ENCODE measurements at regions of chr19 and their contacts with region 1.

Region 1: GRCh38 chr19:18419195-18419698 is at the start of gene SSBP4:
- DNase-seq: peak; percentile 80 to 89
- ATAC-seq: peak; percentile 43 to 69 (median 61)
- H3K4me3 ChIP-seq: peak within 1 kb of the TSS; percentile 84
- H3K27ac ChIP-seq: peak within 1 kb of the TSS; percentile 86
- H3K4me1 ChIP-seq: peaks cover 43% of the 10 kb centered on the region
- H3K27me3 ChIP-seq: peaks cover 0 to 5% (median 0%) of the 10 kb centered on the region in 3 donors
- CTCF ChIP-seq: peak; percentile 47
- total RNA-seq, gene SSBP4: 29.1 to 46.1 (median 29.6) TPM

Region 2: GRCh38 chr19:18203863-18204393 is 215.3 kb before region 1 on chr19 and contains the start of gene RAB3A:
- intact Hi-C with region 1: loop called in 1 of 2 experiments (anchors 5 kb)
- DNase-seq: peak; percentile 100
- ATAC-seq: peak; percentile 90 to 95 (median 93)
- H3K4me3 ChIP-seq: peak within 1 kb of the TSS; percentile 77
- H3K27ac ChIP-seq: peak within 1 kb of the TSS; percentile 98
- H3K4me1 ChIP-seq: peaks cover 22% of the 10 kb centered on the region
- H3K27me3 ChIP-seq: no peaks in the 10 kb centered on the region
- CTCF ChIP-seq: no peak
- total RNA-seq, gene RAB3A: 0.86 to 3.6 (median 1.5) TPM

Region 3: GRCh38 chr19:18224525-18225354 is 194.5 kb before region 1 on chr19:
- intact Hi-C with region 1: loop called in 1 of 2 experiments (anchors 10 kb)
- DNase-seq: peak; percentile 99
- ATAC-seq: peak; percentile 96 to 100 (median 97)
- H3K4me3 ChIP-seq: peak overlapping the region; percentile 65
- H3K27ac ChIP-seq: peak overlapping the region; percentile 69
- H3K4me1 ChIP-seq: peaks cover 27% of the 10 kb centered on the region
- H3K27me3 ChIP-seq: peaks cover 0 to 3% (median 0%) of the 10 kb centered on the region in 3 donors
- CTCF ChIP-seq: no peak

Region 4: DNA sequence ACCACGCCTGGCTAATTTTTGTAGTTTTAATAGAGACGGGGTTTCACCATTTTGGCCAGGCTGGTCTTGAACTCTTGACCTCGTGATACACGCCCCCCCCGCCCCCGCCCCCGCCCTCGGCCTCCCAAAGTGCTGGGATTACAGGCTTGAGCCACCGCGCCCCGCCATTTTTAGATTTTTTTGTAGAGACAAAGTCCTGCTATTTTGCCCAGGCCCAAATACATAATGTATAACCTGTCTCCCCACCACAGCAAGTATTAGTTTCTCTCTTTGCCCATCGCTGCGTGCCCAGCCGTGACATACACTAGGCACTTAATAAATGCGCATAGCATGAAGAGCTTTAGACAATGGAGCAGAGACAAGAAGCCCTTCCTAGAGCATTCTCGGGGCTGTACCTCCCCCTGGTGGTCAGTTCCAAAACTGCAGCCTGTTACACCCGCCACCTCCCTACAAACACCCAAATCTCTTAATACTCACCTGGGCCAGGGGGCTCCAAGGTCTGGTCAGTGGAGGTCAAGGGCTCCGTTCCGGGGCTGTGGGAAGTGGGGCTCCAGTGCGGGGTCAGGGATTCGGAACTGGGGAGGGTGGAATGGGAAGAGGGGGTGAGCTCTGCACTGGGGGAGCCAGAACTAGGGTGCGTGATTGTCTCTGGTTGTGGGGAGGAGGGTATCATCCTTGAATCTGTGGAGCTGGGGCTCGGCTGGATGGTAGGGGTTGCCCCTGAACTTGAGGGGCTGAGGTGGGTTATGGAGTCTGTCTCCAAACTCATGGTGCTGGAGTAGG is 167.5 kb before region 1 on chr19:
- intact Hi-C with region 1: loop called in 1 of 2 experiments (anchors 10 kb)
- DNase-seq: peak; percentile 74 to 81
- ATAC-seq: peak; percentile 79 to 92 (median 88)
- H3K4me3 ChIP-seq: no peak overlapping the region
- H3K27ac ChIP-seq: no peak overlapping the region
- H3K4me1 ChIP-seq: no peaks in the 10 kb centered on the region
- H3K27me3 ChIP-seq: no peaks in the 10 kb centered on the region
- CTCF ChIP-seq: peak; percentile 97

Region 5: DNA sequence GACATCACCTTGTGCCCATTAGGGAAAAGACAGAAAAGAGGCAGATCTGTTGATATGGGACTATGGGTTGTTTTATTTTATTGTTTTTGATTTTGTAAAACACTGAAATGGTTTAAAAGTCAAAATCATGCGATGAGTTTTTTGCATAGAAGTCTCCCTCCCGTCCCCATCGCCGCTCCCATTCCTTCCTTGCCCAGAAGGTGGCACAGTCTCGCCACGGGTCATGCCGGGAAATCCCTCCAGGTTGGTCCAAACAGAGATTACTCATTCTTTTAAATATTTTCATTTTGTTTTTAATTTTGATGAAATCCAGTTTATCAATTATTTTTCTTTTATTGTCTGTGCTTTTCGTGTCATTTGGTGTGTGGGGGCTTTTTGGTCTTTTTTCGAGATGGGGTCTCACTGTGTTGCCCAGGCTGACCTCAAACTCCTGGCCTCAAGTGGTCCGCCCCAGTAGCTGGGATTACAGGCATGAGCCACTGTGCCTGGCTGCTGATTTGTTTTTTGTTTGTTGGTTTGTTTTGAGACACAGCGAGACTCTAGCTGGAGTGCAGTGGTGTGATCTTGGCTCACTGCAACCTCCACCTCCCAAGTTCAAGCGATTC is 69.6 kb before region 1 on chr19:
- intact Hi-C with region 1: loop called in 1 of 2 experiments (anchors 5 kb)
- DNase-seq: peak; percentile 60 to 73
- ATAC-seq: peak; percentile 57 to 81 (median 74)
- H3K4me3 ChIP-seq: no peak overlapping the region
- H3K27ac ChIP-seq: no peak overlapping the region
- H3K4me1 ChIP-seq: peaks cover 3% of the 10 kb centered on the region
- H3K27me3 ChIP-seq: no peaks in the 10 kb centered on the region
- CTCF ChIP-seq: peak; percentile 75